ENCODE measurements at regions of chr2 and their contacts with region 1.

Region 1: DNA sequence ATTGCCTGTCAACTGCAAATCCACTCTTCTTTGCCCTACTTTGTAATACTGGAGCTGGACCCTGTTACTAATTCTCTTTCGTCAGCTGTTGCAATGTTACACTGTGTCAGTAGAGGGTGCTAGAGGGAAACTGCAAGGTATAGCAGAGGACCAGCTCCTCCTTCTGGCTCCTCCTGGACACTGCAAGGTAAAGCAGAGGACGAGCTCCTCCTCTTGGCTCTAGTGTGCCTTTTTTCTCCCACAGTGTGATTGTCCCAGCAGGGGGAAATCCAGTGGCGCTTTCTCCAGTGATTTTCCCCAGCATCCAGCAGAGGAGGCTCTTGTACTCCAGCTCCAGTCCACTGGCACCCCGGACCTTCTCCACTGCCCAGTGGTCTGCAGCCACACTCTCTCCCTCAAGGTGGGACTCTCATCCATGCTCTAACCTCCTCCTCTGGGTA is 95.6 kb downstream of the CAPN13 start:
- DNase-seq: peak; percentile 80
- H3K4me3 Mint-ChIP-seq: no peak overlapping the region
- H3K27ac Mint-ChIP-seq: no peak overlapping the region
- H3K4me1 Mint-ChIP-seq: peaks cover 16% of the 10 kb centered on the region
- H3K27me3 Mint-ChIP-seq: no peaks in the 10 kb centered on the region

Region 2: DNA sequence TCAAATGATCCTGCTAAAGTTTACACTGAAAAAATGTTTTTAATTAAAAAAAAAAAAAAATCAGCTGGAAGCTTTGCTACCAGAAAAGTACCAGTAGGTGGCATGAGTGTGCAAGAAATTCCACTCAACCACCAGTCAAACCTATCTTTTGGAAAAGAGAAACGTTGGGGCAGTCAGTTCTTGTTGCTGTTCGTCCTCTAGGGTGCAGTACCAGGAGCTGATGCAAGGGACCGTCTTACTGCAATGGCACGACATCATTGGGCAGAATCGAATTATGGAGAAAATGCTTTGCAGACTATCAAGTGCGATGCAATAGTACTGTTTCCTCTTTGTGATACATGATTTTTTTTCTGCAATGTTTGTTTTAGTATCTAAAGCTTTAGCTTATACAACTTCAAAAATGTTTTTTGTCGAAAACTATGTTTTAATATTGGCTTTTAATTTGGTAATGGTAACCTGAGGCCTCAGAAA is 546.6 kb before region 1 on chr2:
- intact Hi-C with region 1: loop called (anchors 1 kb)
- DNase-seq: peak; percentile 62
- H3K4me3 Mint-ChIP-seq: no peak overlapping the region
- H3K27ac Mint-ChIP-seq: no peak overlapping the region
- H3K4me1 Mint-ChIP-seq: peaks cover 5% of the 10 kb centered on the region
- H3K27me3 Mint-ChIP-seq: peaks cover 3% of the 10 kb centered on the region

Region 3: DNA sequence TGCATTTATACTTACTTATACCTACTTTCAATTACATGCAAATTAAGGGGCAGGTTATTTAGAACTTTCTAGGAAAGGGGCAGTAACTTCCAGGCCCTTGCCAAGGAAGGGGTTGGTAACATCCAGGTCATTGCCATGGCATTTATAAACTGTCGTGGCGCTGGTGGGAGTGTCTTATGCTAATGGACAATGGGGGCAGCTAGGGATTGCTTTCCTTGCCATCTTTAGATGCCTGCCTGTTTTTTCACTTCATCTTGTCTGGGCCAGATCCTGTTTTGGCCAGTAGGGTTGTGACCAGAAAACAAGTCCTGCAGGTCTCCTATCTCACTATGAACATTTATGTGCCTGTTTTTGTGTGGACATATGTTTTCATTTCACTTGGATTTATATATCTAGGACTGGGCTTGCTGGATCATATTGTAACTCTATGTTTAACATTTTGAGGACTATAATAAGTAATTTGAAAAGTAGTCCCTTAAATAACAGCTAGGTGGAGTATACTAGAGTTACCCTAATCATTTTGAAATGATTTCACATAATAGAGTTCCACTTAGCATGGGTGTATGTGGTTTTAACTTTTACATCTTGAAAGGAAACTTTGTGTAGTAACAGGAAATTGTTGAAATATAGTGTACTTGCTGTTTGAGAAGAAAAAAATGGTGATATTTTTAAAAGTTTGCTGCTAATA is 208.5 kb before region 1 on chr2:
- intact Hi-C with region 1: no loop called
- DNase-seq: no peak
- H3K4me3 Mint-ChIP-seq: no peak overlapping the region
- H3K27ac Mint-ChIP-seq: peak overlapping the region; percentile 74
- H3K4me1 Mint-ChIP-seq: peaks cover 27% of the 10 kb centered on the region
- H3K27me3 Mint-ChIP-seq: no peaks in the 10 kb centered on the region

Region 4: DNA sequence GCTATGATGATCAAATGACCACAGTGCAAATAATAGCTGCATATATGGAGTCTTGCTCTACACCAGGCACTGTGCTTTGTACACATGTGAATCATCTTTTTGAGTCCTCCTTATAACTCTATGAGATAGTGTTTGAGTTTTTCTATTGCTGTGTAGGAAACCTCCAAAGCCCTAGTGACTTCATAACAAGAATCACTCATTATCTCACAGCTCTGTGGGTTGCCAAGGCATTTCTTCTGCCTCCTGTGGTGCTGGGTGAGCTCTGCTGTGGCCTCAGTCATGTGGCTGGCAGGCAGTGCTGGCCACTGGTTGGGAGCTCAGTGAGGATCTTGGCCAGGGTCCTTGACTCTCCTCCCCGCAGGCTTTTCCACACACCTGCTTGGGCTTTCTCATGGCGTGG is 57.8 kb before region 1 on chr2:
- intact Hi-C with region 1: no loop called
- DNase-seq: no peak
- H3K4me3 Mint-ChIP-seq: no peak overlapping the region
- H3K27ac Mint-ChIP-seq: no peak overlapping the region
- H3K4me1 Mint-ChIP-seq: no peaks in the 10 kb centered on the region
- H3K27me3 Mint-ChIP-seq: no peaks in the 10 kb centered on the region

Region 5: DNA sequence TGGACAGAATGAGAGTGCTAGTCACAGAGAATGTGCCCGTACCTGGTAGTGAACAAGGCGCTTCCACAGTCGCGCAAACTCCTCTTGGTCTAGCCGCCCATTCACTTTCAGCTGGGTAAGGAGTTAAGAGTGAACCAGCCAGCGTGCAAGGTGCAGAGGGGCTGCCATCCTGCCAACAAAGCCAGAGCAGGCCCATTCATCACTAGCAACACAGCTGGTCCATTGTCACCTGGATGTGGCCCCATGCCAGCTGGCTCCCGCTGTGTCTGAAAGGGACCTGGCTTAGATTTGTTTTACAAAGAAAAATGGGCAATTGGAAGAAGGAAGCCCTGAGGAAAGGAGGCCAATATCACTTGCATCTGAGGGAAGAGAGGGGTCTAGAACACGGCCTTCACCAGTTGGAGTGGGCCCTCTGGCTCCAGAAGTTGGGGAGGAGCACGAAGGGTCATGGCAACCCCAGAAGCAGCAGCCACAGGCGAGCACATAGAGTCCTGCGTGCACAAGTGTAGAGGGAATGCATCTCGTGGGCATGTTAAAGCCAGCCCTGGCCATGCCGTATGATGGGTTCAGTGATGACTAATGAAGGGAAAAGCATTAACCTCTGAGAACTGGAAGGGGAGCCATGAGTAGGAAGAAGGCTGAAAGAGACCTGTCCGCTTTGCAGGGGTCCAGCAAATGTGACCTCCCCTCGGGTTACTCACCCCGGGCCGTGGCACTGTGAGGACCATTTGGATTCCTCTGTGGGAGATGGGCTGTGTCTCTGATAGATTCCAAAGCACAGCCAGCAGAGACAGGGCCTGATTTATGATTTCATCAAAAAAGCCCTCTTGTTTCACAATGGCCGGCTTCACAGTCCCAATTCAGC is 25.0 kb after region 1 on chr2:
- intact Hi-C with region 1: no loop called
- DNase-seq: no peak
- H3K4me3 Mint-ChIP-seq: no peak overlapping the region
- H3K27ac Mint-ChIP-seq: no peak overlapping the region
- H3K4me1 Mint-ChIP-seq: no peaks in the 10 kb centered on the region
- H3K27me3 Mint-ChIP-seq: peaks cover 4% of the 10 kb centered on the region

Region 6: GRCh38 chr2:30862054-30862651 is 150.5 kb after region 1 on chr2:
- intact Hi-C with region 1: loop called (anchors 1 kb)
- DNase-seq: no peak
- H3K4me3 Mint-ChIP-seq: no peak overlapping the region
- H3K27ac Mint-ChIP-seq: no peak overlapping the region
- H3K4me1 Mint-ChIP-seq: peaks cover 13% of the 10 kb centered on the region
- H3K27me3 Mint-ChIP-seq: peaks cover 8% of the 10 kb centered on the region

Region 7: DNA sequence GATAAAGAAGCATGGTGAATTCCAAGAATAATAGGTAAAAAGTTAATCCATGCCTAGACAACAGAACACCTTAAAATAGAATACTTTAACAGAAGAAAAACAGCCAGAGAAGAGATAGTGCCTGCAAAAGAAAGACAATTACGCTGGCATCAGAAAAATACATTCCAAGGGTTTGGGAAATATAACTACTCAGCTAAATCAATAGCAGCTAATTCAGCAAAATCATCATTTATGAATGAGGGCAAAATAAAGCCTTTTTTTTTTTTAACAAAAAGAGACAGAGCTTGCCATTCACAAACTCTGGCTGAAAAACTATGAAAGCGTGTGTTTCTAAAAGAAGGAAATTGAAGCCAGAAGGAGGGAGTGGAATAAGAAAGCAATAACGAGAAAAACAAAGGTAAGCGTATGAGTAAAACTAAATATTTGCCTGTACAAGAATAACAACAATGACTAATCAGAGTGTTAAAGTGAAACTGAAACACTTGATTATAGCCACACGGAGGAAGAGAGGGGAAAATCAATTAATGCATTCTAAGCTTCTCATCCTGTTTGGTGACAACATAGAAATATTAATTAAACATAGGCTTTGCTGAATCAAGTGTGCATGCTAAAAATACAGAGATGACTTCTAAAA is 612.5 kb after region 1 on chr2:
- intact Hi-C with region 1: loop called (anchors 2 kb)
- DNase-seq: no peak
- H3K4me3 Mint-ChIP-seq: peak overlapping the region; percentile 56
- H3K27ac Mint-ChIP-seq: peak overlapping the region; percentile 66
- H3K4me1 Mint-ChIP-seq: peaks cover 52% of the 10 kb centered on the region
- H3K27me3 Mint-ChIP-seq: peaks cover 6% of the 10 kb centered on the region

Region 8: GRCh38 chr2:31434911-31435310 is 723.2 kb after region 1 on chr2:
- intact Hi-C with region 1: loop called (anchors 10 kb)
- DNase-seq: no peak
- H3K4me3 Mint-ChIP-seq: no peak overlapping the region
- H3K27ac Mint-ChIP-seq: no peak overlapping the region
- H3K4me1 Mint-ChIP-seq: no peaks in the 10 kb centered on the region
- H3K27me3 Mint-ChIP-seq: no peaks in the 10 kb centered on the region

Measured in activated T-helper 1 cell treated with anti-CD3 and anti-CD28 coated beads, Interleukin-12 subunit alpha, Interleukin-12 subunit beta, Interleukin-2, Interleukin-4 antibody, amounts not matched to agents 30 ng/mL and 10 ng/mL and 1 ng/mL, durations not matched to agents 14 hours and 24 hours and 36 hours (primary cell).